ENCODE measurements at regions of chr20 and their contacts with region 1.

Region 1: GRCh38 chr20:53547664-53548239 is 45.9 kb downstream of the ZNF217 start:
- DNase-seq: peak; percentile 15 to 31 (median 15)
- H3K4me3 ChIP-seq: no peak overlapping the region
- H3K4me3 Mint-ChIP-seq: no peak overlapping the region
- H3K27ac ChIP-seq: no peak overlapping the region
- H3K27ac Mint-ChIP-seq: no peak overlapping the region
- H3K4me1 ChIP-seq: no peaks in the 10 kb centered on the region
- H3K4me1 Mint-ChIP-seq: peaks cover 7% of the 10 kb centered on the region
- H3K27me3 ChIP-seq: no peaks in the 10 kb centered on the region
- H3K27me3 Mint-ChIP-seq: peaks cover 0 to 3% (median 2%) of the 10 kb centered on the region in 3 donors
- CTCF ChIP-seq: peak; percentile 57

Region 2: GRCh38 chr20:53157443-53158408 is 390.0 kb before region 1 on chr20:
- intact Hi-C with region 1: loop called in 1 of 2 experiments (anchors 5 kb)
- DNase-seq: peak; percentile 2 to 31 (median 21)
- H3K4me3 ChIP-seq: no peak overlapping the region
- H3K4me3 Mint-ChIP-seq: no peak overlapping the region
- H3K27ac ChIP-seq: no peak overlapping the region
- H3K27ac Mint-ChIP-seq: no peak overlapping the region
- H3K4me1 ChIP-seq: no peaks in the 10 kb centered on the region
- H3K4me1 Mint-ChIP-seq: peaks cover 3% of the 10 kb centered on the region
- H3K27me3 ChIP-seq: no peaks in the 10 kb centered on the region
- H3K27me3 Mint-ChIP-seq: peaks cover 0 to 3% (median 2%) of the 10 kb centered on the region in 3 donors
- CTCF ChIP-seq: peak; percentile 48

Region 3: DNA sequence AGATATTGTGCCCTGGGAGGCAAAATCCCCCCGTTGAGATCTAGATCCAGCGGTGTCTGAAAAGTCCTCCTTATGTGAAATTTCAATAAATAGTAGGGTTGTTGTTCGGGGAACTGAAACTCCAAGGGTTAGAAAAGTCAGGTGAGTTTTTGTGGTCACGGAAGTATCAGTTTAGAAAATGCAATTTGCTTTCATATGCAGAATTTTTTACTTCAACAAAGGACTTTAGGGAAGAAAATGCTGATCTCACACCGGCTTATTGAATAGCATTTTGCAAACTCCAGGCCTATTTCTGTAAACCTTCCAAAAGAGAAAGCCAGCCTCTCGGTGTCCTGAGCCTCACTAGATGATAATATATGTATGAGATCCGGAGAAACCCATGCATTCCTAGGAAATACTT is 320.9 kb before region 1 on chr20:
- intact Hi-C with region 1: no loop called
- DNase-seq: no peak
- H3K4me3 ChIP-seq: no peak overlapping the region
- H3K4me3 Mint-ChIP-seq: no peak overlapping the region
- H3K27ac ChIP-seq: no peak overlapping the region
- H3K27ac Mint-ChIP-seq: no peak overlapping the region
- H3K4me1 ChIP-seq: no peaks in the 10 kb centered on the region
- H3K4me1 Mint-ChIP-seq: peaks cover 3% of the 10 kb centered on the region
- H3K27me3 ChIP-seq: no peaks in the 10 kb centered on the region
- H3K27me3 Mint-ChIP-seq: peaks cover 0 to 5% (median 2%) of the 10 kb centered on the region in 3 donors
- CTCF ChIP-seq: no peak

Region 4: DNA sequence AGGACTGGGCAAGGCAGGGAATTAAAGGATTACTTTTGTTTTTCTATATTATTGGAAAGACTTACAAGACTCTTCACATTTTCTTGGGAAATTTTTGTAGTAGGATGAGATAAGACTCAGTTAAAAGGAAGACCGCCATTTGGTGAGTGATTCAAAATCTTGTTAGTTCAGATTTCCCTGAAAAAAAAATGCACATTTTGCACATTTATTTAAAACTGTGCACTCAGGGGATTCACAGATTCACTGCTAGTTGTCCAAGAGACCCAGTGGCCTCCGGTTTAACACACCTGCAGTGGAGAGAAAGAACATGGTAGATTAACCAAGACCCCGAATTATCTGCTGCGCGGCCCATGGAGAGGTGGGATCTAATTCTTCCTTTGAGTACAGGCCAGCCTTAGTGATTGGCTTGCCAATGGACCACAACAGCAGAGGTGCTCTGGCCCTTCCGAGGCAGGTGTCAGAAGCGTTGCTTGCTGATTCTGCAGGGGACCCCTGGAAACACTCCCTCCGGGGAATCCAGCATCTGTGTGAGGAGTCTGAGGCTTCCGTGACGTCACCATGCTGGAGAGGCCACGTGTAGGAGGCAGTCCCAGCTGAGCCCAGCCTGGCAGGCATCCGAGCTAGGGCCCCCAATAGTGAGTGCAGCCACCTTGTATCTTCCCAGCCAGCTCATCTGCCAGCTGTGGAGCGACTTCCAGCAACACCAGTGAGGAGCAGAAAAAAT is 23.0 kb before region 1 on chr20:
- intact Hi-C with region 1: no loop called
- DNase-seq: no peak
- H3K4me3 ChIP-seq: no peak overlapping the region
- H3K4me3 Mint-ChIP-seq: no peak overlapping the region
- H3K27ac ChIP-seq: no peak overlapping the region
- H3K27ac Mint-ChIP-seq: no peak overlapping the region
- H3K4me1 ChIP-seq: no peaks in the 10 kb centered on the region
- H3K4me1 Mint-ChIP-seq: no peaks in the 10 kb centered on the region
- H3K27me3 ChIP-seq: no peaks in the 10 kb centered on the region
- H3K27me3 Mint-ChIP-seq: peaks cover 4 to 6% (median 6%) of the 10 kb centered on the region in 3 donors
- CTCF ChIP-seq: no peak

Measured in CD14-positive monocyte (primary cell).